Activated CD4-positive, alpha-beta memory T cell treated with anti-CD3 and anti-CD28 coated beads for 36 hours (primary cell): ENCODE measurements at regions of chr11 and their contacts with region 1.

Region 1: GRCh38 chr11:46238967-46239800 is 38.3 kb upstream of the CREB3L1 start:
- DNase-seq: peak; percentile 89
- H3K4me3 Mint-ChIP-seq: peak overlapping the region; percentile 74
- H3K27ac Mint-ChIP-seq: no peak overlapping the region
- H3K4me1 Mint-ChIP-seq: peaks cover 36% of the 10 kb centered on the region
- H3K27me3 Mint-ChIP-seq: peaks cover 1% of the 10 kb centered on the region

Region 2: GRCh38 chr11:45846974-45847910 is 391.9 kb before region 1 on chr11 and contains the start of gene CRY2:
- CTCF ChIA-PET with region 1: no interaction called
- POLR2A ChIA-PET with region 1: no interaction called
- intact Hi-C with region 1: loop called (anchors 5 kb)
- DNase-seq: peak; percentile 99
- H3K4me3 Mint-ChIP-seq: peak within 1 kb of the TSS; percentile 77
- H3K27ac Mint-ChIP-seq: peak within 1 kb of the TSS; percentile 78
- H3K4me1 Mint-ChIP-seq: peaks cover 55% of the 10 kb centered on the region
- H3K27me3 Mint-ChIP-seq: no peaks in the 10 kb centered on the region
- total RNA-seq, gene CRY2: 12.1 to 13.4 TPM

Region 3: DNA sequence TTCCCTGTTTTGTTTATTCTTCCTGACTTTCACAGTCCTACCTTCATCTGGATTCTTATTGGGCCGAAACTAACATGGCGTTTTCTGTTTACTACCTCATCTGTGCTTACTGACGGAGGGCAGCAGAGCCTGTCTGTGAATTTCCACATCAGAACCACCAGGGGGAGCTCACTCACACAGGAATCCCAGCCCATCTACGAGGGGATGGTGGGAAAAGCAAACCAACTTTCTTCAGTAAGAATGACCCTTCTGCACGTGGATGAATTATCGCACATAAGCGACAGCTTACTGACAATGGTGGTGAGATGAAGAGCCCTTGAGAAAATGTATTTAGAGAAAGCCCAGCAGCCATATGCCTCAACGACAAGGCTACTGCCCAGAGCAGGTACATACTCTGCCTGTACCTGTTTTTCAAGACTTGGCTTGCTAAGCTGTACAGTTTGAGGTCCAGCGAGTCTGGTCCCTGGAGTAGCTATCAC is 274.2 kb before region 1 on chr11:
- CTCF ChIA-PET with region 1: interaction called, 14 read pairs
- POLR2A ChIA-PET with region 1: no interaction called
- intact Hi-C with region 1: no loop called
- DNase-seq: peak; percentile 69
- H3K4me3 Mint-ChIP-seq: no peak overlapping the region
- H3K27ac Mint-ChIP-seq: no peak overlapping the region
- H3K4me1 Mint-ChIP-seq: no peaks in the 10 kb centered on the region
- H3K27me3 Mint-ChIP-seq: no peaks in the 10 kb centered on the region

Region 4: DNA sequence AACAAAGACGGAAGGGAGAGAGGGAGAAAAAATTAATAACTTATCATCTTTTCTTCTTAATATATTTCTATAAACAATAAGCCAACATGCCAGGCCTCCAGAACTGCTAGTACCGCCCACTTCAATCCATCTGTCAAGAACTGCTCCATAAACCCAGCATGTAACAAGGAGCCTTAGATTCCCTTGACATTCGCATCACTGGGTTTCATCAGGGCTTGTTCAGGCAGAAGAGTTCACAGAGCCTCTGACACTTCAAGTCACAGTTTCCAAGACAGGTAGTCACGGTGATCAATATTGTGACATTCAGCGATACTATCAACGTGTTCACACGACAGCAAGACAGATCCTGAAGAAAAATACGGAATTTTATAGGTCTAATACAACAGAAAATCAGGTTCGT is 255.0 kb before region 1 on chr11:
- CTCF ChIA-PET with region 1: no interaction called
- POLR2A ChIA-PET with region 1: no interaction called
- intact Hi-C with region 1: no loop called
- DNase-seq: no peak
- H3K4me3 Mint-ChIP-seq: no peak overlapping the region
- H3K27ac Mint-ChIP-seq: no peak overlapping the region
- H3K4me1 Mint-ChIP-seq: peaks cover 35% of the 10 kb centered on the region
- H3K27me3 Mint-ChIP-seq: no peaks in the 10 kb centered on the region

Region 5: DNA sequence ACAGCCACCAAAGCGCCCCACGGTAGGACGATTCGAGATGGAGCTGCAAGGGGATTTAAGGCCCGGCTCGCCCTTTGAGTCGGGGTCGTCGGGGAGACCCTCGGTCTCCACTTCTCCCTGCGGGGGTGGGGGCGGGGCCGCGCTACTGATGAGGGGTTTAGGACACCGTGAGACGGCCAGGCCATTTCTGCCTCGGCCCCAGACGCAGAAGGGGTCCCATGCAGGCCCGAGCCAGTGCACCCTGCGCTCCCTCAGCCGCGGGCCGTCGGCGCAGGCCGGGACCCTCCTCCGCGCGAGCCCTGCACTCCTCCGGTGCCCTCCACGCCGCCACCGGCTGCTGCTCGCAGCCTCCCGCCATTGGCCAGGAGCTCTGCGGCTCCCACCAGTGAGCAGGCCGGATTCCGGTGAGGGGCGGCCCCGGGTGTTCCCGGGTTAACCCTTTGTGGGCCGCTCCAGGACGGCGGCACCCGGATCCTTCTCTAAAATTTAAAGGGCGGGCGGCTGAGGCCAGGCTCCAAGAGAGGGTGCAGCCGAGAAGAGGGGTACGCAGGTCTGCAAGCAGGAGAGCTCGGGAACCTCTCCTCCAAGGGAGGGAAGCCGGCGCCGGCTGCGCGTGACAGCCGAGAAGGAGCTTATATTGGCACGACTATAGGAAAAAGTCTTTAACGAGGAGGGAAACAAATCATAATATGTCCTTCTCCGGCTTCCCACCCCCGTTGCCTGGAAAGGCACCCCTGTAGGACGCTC is 56.3 kb after region 1 on chr11:
- CTCF ChIA-PET with region 1: interaction called, 16 read pairs
- POLR2A ChIA-PET with region 1: interaction called, 6 read pairs
- intact Hi-C with region 1: no loop called
- DNase-seq: peak; percentile 77
- H3K4me3 Mint-ChIP-seq: peak overlapping the region; percentile 70
- H3K27ac Mint-ChIP-seq: no peak overlapping the region
- H3K4me1 Mint-ChIP-seq: peaks cover 7% of the 10 kb centered on the region
- H3K27me3 Mint-ChIP-seq: peaks cover 15% of the 10 kb centered on the region

Region 6: DNA sequence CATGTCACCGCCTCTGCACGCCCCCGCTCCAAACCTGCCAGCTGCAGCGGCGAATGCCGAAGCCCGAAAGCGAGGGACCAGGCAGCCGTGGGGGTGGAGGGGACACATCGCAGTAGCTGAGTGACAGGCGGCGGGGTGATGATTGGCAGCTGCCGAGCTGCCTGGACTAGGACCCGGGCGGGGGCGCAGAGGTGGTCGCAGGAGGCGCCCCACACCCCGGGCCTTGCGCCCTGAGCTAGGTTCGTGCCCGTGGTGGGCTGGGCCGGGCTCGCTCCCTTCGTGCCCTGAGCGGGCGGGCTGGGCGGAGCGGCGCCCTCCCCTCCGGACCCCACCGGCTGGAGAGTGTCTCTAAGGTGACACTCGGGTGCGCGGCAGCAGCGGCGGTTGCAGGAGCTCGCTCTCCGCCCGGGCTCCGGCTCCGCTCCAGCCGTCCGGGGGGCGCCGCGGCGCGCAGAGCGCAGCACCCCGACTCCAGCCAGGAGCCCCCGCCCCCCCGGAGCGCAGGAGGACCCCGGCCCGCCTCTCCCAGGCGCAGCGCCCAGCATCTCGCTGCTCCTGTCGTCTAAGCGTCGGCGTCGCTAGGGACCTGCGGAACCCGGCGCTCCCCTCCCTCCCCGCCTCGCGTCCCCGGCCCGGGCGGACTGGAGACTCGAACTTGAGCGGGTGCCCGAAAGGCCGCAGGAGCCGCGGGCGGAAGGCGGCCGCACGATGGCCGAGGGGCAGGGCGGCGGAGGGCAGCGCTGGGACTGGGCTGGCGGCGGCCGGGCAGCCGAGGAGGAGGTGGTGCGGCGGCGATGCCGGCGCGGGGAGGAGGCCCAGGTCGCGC is 93.6 kb after region 1 on chr11:
- CTCF ChIA-PET with region 1: interaction called, 18 read pairs
- POLR2A ChIA-PET with region 1: interaction called, 5 read pairs
- intact Hi-C with region 1: no loop called
- DNase-seq: peak; percentile 64
- H3K4me3 Mint-ChIP-seq: peak overlapping the region; percentile 73
- H3K27ac Mint-ChIP-seq: peak overlapping the region; percentile 8
- H3K4me1 Mint-ChIP-seq: peaks cover 67% of the 10 kb centered on the region
- H3K27me3 Mint-ChIP-seq: no peaks in the 10 kb centered on the region

Region 7: DNA sequence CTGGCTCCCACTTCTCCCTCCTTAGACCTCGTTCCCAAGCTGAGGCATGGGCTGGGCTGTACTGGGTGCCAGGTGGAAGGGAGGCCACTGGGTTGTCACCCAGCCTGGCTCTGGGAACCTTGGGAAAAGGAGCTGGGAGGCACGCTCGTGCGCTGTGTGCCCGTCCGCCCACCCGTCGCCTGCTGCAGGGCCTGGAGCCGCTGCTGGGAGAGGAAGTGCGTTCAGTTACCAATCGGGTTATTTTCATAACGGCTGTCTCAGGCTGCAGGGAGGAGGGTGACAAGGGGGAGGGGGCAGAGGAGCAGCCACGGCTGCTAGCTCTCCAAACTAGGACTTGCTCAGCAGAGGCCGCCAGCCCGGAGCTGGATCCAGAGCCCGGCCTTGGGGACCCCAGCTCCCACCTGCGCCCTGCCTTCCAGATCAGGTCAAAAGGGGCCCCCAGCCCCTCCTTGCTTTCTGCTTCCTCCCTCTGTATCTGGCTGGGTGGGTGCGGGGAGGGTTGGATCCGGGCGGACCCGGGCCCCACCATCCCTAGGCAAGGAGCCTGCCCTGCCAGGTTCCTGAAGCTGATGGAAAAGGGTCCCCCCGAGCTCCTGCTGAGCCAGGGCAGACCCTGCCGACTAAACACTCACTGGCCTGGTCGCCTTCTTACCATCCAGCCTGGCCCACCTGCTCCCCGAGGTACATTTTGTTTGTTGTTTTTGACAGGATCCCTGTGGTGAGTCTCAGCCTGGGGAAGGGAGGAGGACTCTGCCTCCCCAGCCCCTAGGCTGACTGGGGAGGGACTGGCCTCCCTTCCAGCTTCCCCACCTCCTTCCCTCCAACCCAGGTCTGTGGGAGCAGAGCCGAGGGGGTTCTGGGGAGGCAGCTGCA is 122.3 kb after region 1 on chr11:
- CTCF ChIA-PET with region 1: interaction called, 11 read pairs
- POLR2A ChIA-PET with region 1: interaction called, 3 read pairs
- intact Hi-C with region 1: no loop called
- DNase-seq: peak; percentile 84
- H3K4me3 Mint-ChIP-seq: peak overlapping the region; percentile 72
- H3K27ac Mint-ChIP-seq: peak overlapping the region; percentile 84
- H3K4me1 Mint-ChIP-seq: peaks cover 62% of the 10 kb centered on the region
- H3K27me3 Mint-ChIP-seq: no peaks in the 10 kb centered on the region

Region 8: GRCh38 chr11:46410021-46410420 is 170.8 kb after region 1 on chr11:
- CTCF ChIA-PET with region 1: no interaction called
- POLR2A ChIA-PET with region 1: no interaction called
- intact Hi-C with region 1: no loop called
- DNase-seq: no peak
- H3K4me3 Mint-ChIP-seq: no peak overlapping the region
- H3K27ac Mint-ChIP-seq: no peak overlapping the region
- H3K4me1 Mint-ChIP-seq: no peaks in the 10 kb centered on the region
- H3K27me3 Mint-ChIP-seq: no peaks in the 10 kb centered on the region

Region 9: GRCh38 chr11:46616998-46617675 is 378.0 kb after region 1 on chr11 and contains the starts of genes ATG13 and HARBI1:
- CTCF ChIA-PET with region 1: interaction called, 3 read pairs
- POLR2A ChIA-PET with region 1: no interaction called
- intact Hi-C with region 1: loop called (anchors 10 kb)
- DNase-seq: peak; percentile 95
- H3K4me3 Mint-ChIP-seq: peak within 1 kb of the TSS; percentile 93
- H3K27ac Mint-ChIP-seq: peak within 1 kb of the TSS; percentile 98
- H3K4me1 Mint-ChIP-seq: peaks cover 39% of the 10 kb centered on the region
- H3K27me3 Mint-ChIP-seq: no peaks in the 10 kb centered on the region
- total RNA-seq, gene ATG13: 49.9 to 51.0 TPM
- total RNA-seq, gene HARBI1: 3.1 TPM